ENCODE measurements at regions of chr20 and their contacts with region 1.

Region 1: GRCh38 chr20:38229376-38230252 is 30.9 kb downstream of the KIAA1755 start:
- DNase-seq: no peak
- ATAC-seq: peak in 3 of 4 donors; percentile 53 to 66 (median 54)
- H3K4me3 ChIP-seq: no peak overlapping the region
- H3K27ac ChIP-seq: no peak overlapping the region
- H3K4me1 ChIP-seq: no peaks in the 10 kb centered on the region
- H3K27me3 ChIP-seq: no peaks in the 10 kb centered on the region
- CTCF ChIP-seq: peak; percentile 49

Region 2: GRCh38 chr20:38304845-38305447 is 75.3 kb after region 1 on chr20:
- intact Hi-C with region 1: loop called (anchors 5 kb)
- DNase-seq: peak; percentile 35 to 76
- ATAC-seq: peak; percentile 58 to 86 (median 68)
- H3K4me3 ChIP-seq: no peak overlapping the region
- H3K27ac ChIP-seq: no peak overlapping the region
- H3K4me1 ChIP-seq: no peaks in the 10 kb centered on the region
- H3K27me3 ChIP-seq: peaks cover 0 to 6% (median 0%) of the 10 kb centered on the region in 3 donors
- CTCF ChIP-seq: peak; percentile 49

Region 3: DNA sequence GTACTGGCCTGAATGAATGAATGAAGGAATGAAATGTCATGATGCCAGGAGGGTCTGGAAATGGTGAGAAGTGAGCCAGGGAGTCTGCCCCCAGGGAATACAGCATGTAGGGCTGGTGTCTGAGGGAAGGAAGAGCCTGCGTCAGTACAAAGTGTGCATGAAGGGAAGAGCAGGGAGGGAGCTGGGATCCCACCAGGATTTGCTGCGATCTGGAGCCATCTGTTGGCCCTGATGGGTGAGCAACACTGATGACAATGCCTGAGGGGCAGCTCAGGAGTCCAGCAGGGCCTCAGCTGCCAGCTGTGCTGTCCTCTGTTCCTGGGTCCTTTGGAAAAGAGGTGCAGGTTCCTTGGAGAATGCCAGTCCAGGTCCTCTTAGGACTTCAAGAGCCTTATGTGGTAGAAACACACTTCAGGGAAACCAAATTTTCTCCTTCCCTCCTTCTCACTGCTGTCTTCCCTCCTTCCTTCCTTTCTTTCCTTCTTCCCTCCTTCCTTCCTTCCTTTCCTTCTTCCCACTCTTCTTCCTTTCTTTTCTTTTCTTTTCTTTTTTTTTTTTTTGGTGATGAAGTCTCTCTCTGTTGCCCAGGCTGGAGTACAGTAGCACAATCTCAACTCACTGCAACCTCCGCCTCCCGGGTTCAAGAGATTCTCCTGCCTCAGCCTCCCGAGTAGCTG is 85.8 kb after region 1 on chr20:
- intact Hi-C with region 1: loop called in 1 of 2 experiments (anchors 5 kb)
- DNase-seq: no peak
- ATAC-seq: no peak
- H3K4me3 ChIP-seq: no peak overlapping the region
- H3K27ac ChIP-seq: no peak overlapping the region
- H3K4me1 ChIP-seq: no peaks in the 10 kb centered on the region
- H3K27me3 ChIP-seq: peaks cover 0 to 12% (median 0%) of the 10 kb centered on the region in 3 donors
- CTCF ChIP-seq: no peak

Region 4: DNA sequence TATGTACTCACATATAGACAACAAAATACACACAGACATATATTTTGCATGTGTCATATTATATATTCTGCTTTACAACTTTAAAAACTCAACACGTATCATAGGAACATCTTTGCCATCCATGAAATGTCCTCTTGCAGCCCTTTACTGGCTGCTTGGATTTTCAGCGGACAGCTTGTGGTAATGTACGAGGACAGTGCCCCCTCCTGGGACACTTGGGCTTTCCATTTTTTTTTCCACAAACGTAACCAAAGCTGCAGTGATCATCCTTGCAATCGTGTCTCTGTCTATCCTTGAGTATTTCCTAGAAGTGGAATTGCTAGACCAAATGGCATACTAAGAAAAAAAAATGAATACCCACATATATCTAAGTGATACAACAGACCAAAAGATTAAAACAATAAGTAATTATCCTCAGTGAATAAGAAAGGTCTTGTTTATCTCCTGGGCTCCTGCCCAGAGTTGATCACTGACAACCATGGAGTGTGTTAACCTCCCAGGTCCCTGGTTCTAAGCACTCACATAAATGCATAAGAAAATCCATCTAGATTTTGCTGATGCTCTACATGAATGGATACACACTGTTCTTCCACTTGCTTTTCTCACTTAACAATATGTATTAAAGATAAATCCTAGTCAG is 92.5 kb after region 1 on chr20:
- intact Hi-C with region 1: loop called (anchors 2 to 5 kb)
- DNase-seq: no peak
- ATAC-seq: peak; percentile 56 to 70 (median 60)
- H3K4me3 ChIP-seq: no peak overlapping the region
- H3K27ac ChIP-seq: no peak overlapping the region
- H3K4me1 ChIP-seq: no peaks in the 10 kb centered on the region
- H3K27me3 ChIP-seq: peaks cover 0 to 12% (median 0%) of the 10 kb centered on the region in 3 donors
- CTCF ChIP-seq: peak; percentile 59